ENCODE measurements at regions of chr11 and their contacts with region 1.

Region 1: GRCh38 chr11:76674517-76675400 is 4.2 kb upstream of the LRRC32 start:
- DNase-seq: no peak
- H3K4me3 ChIP-seq: no peak overlapping the region
- CTCF ChIP-seq: peak; percentile 14

Region 2: DNA sequence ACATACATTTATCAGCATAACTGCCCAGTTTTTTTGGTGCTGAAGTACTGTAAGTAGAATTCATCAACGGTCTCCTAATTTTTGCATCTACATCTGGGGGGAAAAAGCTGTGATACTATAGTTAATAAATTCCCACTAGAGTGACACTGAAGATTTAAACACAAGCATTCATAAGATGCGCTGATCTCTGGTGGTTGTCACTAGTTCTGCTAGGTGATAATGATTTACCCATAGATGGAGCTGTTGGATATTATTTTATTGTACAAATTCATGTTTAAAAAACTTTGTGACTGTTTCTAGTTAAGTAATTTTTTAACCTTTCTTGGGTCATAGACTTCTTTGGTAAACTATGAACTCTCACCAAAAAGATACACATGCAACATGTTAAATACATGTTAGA is 123.4 kb before region 1 on chr11:
- in situ Hi-C with region 1: loop called (anchors 5 kb)
- DNase-seq: no peak
- H3K4me3 ChIP-seq: no peak overlapping the region
- CTCF ChIP-seq: peak; percentile 11

Region 3: GRCh38 chr11:76724162-76724768 is 49.5 kb after region 1 on chr11:
- in situ Hi-C with region 1: no loop called
- DNase-seq: no peak
- H3K4me3 ChIP-seq: no peak overlapping the region
- CTCF ChIP-seq: no peak

Region 4: DNA sequence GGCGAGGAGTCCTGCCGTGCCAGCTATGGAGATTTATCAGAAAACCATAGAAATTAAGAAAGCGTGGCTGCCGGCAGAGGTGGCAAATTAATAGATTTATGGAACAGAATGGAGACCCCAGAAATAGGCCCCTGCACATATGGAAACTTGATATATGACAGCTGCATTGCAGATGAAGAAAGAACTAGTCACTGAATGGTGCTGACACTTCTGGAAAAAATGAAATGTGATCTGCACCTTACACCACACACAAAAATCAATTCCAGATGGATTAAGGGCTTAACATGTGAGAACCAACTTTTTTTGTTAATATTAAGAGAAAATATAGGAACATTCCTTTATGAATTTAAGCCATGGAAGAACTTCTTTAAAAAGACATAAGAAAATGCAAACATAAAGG is 68.1 kb after region 1 on chr11:
- in situ Hi-C with region 1: no loop called
- DNase-seq: no peak
- H3K4me3 ChIP-seq: no peak overlapping the region
- CTCF ChIP-seq: no peak